HCT116 (cell line): ENCODE measurements at regions of chr1 and their contacts with region 1.

Region 1: GRCh38 chr1:13543451-13544220 is 29.8 kb upstream of the LRRC38 start:
- DNase-seq: peak; percentile 42
- ATAC-seq: peak; percentile 88
- H3K4me3 ChIP-seq: no peak overlapping the region
- H3K27ac ChIP-seq: no peak overlapping the region
- H3K4me1 ChIP-seq: peaks cover 0 to 7% of the 10 kb centered on the region in 2 experiments; a peak in 2 of 4 replicates
- H3K27me3 ChIP-seq: peaks cover 4% of the 10 kb centered on the region; the same call in 1 of the 2 replicates
- CTCF ChIP-seq: peak; percentile 69 to 77 (median 71)
- POLR2A ChIP-seq: no peak
- RAD21 ChIP-seq: peak; percentile 71

Region 2: DNA sequence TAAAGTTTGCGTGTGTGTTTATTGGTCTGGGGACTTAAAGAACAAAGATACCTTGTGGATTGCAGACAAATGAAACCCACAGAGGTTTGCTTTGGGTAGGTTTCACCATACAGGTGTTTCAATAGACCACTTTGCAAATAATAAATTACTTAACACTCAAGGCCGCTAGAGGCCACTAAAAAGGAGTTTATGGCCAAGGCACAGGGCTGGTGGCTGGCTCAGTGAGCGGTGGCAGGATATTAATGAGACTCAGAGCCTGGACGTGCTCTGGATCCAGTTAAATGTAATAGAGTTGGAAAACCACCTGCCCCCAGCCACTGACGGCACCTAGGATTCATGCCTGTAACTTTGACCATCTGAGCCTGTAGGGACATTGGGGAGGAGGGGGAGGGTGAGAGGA is 74.3 kb before region 1 on chr1:
- CTCF ChIA-PET with region 1: no interaction called
- POLR2A ChIA-PET with region 1: no interaction called
- RAD21 ChIA-PET with region 1: no interaction called
- intact Hi-C with region 1: loop called (anchors 1 kb)
- DNase-seq: no peak
- ATAC-seq: peak; percentile 92
- H3K4me3 ChIP-seq: no peak overlapping the region
- H3K27ac ChIP-seq: no peak overlapping the region
- H3K4me1 ChIP-seq: no peaks in the 10 kb centered on the region
- H3K27me3 ChIP-seq: 0 out of 2 replicates have a peak, but pooled peaks cover 3% of the 10 kb centered on the region
- CTCF ChIP-seq: peak; percentile 23 to 44 (median 33); a peak in 3 of 6 replicates
- POLR2A ChIP-seq: no peak
- RAD21 ChIP-seq: peak; percentile 52; the same call in 1 of the 2 replicates